ENCODE measurements at regions of chr11 and their contacts with region 1.

Region 1: DNA sequence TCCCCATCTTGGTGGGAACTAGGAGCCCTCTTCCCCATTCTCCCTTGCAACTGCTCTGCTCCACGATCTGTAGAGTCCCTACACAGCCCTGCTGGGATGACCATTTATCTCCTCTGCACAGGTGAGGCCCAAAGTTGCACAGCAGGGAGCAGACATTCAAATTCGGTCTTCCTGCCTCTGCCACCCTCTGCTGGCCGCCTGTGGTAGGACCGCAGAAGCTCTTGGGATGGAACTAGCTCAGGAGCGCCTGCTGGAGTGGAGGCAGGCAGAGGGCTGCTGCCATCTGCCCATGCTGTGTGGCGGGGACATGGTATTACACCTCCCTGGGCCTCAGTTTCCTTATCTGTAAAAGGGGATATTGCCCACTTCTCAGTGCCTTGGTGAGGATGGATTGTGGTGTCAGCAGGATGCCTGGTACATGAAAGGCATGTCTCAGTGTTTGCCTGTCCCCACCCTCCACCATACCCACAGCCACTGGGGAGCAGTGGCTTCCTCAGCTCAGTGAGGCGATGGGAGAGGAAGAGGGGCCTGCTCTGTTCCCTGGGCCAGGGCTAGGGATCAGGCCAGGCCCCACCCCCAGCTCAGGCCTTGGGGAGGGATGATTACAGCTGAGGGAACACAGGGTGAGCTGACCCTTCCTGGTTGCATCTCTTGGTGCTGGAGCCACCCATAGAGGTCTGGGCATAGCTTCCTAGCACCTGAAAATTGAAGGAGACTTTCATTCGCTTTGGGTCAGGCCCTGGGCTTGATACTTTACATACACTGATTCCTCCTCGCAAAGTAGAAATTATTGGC is 11.3 kb upstream of the OMP start:
- DNase-seq: peak; percentile 90
- H3K4me3 Mint-ChIP-seq: no peak overlapping the region
- H3K27ac Mint-ChIP-seq: peak overlapping the region; percentile 64
- H3K4me1 Mint-ChIP-seq: peaks cover 6% of the 10 kb centered on the region
- H3K27me3 Mint-ChIP-seq: peaks cover 8% of the 10 kb centered on the region

Region 2: GRCh38 chr11:76734456-76735420 is 356.6 kb before region 1 on chr11:
- CTCF ChIA-PET with region 1: interaction called, 11 read pairs
- DNase-seq: no peak
- H3K4me3 Mint-ChIP-seq: no peak overlapping the region
- H3K27ac Mint-ChIP-seq: no peak overlapping the region
- H3K4me1 Mint-ChIP-seq: peaks cover 6% of the 10 kb centered on the region
- H3K27me3 Mint-ChIP-seq: peaks cover 27% of the 10 kb centered on the region

Region 3: GRCh38 chr11:76807206-76807875 is 284.0 kb before region 1 on chr11:
- CTCF ChIA-PET with region 1: interaction called, 10 read pairs
- DNase-seq: peak; percentile 81
- H3K4me3 Mint-ChIP-seq: no peak overlapping the region
- H3K27ac Mint-ChIP-seq: no peak overlapping the region
- H3K4me1 Mint-ChIP-seq: peaks cover 46% of the 10 kb centered on the region
- H3K27me3 Mint-ChIP-seq: peaks cover 39% of the 10 kb centered on the region

Region 4: GRCh38 chr11:76974179-76974891 is 117.0 kb before region 1 on chr11:
- CTCF ChIA-PET with region 1: no interaction called
- DNase-seq: no peak
- H3K4me3 Mint-ChIP-seq: no peak overlapping the region
- H3K27ac Mint-ChIP-seq: no peak overlapping the region
- H3K4me1 Mint-ChIP-seq: no peaks in the 10 kb centered on the region
- H3K27me3 Mint-ChIP-seq: no peaks in the 10 kb centered on the region

Region 5: GRCh38 chr11:77039491-77040400 is 51.6 kb before region 1 on chr11:
- CTCF ChIA-PET with region 1: interaction called, 38 read pairs
- DNase-seq: peak; percentile 57
- H3K4me3 Mint-ChIP-seq: no peak overlapping the region
- H3K27ac Mint-ChIP-seq: no peak overlapping the region
- H3K4me1 Mint-ChIP-seq: peaks cover 6% of the 10 kb centered on the region
- H3K27me3 Mint-ChIP-seq: peaks cover 69% of the 10 kb centered on the region

Region 6: GRCh38 chr11:77047007-77047927 is 44.1 kb before region 1 on chr11:
- CTCF ChIA-PET with region 1: interaction called, 152 read pairs
- DNase-seq: peak; percentile 86
- H3K4me3 Mint-ChIP-seq: peak overlapping the region; percentile 48
- H3K27ac Mint-ChIP-seq: peak overlapping the region; percentile 30
- H3K4me1 Mint-ChIP-seq: peaks cover 16% of the 10 kb centered on the region
- H3K27me3 Mint-ChIP-seq: peaks cover 22% of the 10 kb centered on the region

Region 7: DNA sequence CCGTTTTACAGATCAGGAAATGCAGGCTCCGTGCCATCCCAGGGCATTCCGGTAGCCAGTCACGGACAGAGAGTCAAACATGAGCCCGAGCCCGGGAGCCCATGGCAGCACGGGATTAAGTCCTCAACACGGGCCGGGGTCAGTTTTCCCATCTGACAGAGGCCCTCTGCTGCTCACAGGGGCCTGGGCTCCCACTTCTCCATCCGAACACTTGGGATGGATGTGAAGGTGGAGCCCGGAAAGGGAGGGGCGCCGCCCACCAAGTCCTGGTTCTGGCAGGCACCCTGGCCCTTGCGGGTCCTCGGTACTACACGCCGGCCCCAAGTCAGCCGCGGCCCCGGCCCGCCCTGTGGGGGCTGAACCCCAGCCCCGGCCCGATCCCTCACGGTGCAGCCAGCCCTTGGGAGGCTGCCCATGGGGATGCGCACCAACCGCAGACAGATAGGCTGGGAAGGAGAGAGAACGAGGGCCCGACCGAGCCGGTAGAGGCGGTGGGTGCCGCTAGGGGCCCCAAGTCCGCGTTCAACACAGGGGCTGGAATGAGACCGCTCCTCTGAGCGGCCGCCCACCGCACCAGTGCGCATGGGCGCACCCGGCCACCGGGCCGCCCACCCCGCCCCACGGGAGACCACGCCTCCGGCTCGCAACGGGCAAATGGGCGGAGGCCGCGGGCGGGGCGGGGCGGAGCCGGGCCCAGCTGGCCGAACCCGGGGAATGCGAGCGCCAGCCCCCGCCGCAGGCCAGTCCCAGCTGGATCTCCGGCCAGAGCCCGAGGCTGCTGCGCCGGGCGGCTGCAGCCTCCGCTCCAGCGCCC is 24.9 kb before region 1 on chr11 and contains the start of gene CAPN5:
- CTCF ChIA-PET with region 1: interaction called, 56 read pairs
- DNase-seq: peak; percentile 88
- H3K4me3 Mint-ChIP-seq: peak within 1 kb of the TSS; percentile 71
- H3K27ac Mint-ChIP-seq: peak within 1 kb of the TSS; percentile 24
- H3K4me1 Mint-ChIP-seq: peaks cover 10% of the 10 kb centered on the region
- H3K27me3 Mint-ChIP-seq: peaks cover 74% of the 10 kb centered on the region

Region 8: DNA sequence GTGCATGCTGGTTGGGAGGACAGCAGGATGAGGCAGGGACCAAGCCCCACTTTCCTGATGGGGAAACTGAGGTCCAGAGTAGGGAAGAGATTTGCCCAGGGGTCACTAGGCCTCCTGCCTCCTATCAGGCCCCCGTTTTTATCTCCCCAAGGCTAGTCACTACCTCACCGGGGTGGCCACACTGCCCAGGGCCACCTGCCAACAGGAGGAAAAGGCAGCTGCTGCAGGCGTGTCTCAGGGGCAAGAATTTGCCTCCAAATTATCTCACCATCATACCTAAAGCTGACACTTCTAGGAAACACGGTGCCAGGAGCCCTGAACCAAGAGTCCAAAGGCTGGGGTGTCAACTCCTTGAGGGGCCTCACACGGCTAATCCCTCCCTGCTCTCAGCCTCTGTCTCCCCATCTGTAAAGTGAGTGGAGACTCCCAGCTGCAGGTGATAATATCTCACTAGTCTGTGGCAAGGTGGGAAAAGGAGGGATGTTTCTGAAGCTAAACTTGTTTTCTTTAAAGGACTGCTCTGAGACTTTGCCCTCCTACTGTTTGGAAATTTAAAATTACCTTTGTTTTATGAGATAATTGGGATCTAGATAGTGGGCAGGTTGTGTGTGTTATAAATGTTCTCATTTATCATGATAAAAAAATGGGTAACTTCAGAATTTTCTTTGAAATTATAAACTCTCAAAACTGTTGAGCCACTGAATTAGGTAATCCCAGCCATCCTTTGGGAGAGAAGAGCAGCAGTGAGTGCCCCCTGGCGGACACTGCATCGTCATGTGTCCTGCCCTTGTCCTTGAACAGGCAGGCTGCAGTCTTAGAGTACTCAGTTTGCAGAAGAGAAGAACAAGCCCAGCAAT is 96.7 kb after region 1 on chr11:
- CTCF ChIA-PET with region 1: interaction called, 10 read pairs
- DNase-seq: peak; percentile 78
- H3K4me3 Mint-ChIP-seq: no peak overlapping the region
- H3K27ac Mint-ChIP-seq: no peak overlapping the region
- H3K4me1 Mint-ChIP-seq: no peaks in the 10 kb centered on the region
- H3K27me3 Mint-ChIP-seq: peaks cover 3% of the 10 kb centered on the region